Activated naive CD4-positive, alpha-beta T cell treated with anti-CD3 and anti-CD28 coated beads for 36 hours (primary cell): ENCODE measurements at regions of chr5 and their contacts with region 1.

Region 1: DNA sequence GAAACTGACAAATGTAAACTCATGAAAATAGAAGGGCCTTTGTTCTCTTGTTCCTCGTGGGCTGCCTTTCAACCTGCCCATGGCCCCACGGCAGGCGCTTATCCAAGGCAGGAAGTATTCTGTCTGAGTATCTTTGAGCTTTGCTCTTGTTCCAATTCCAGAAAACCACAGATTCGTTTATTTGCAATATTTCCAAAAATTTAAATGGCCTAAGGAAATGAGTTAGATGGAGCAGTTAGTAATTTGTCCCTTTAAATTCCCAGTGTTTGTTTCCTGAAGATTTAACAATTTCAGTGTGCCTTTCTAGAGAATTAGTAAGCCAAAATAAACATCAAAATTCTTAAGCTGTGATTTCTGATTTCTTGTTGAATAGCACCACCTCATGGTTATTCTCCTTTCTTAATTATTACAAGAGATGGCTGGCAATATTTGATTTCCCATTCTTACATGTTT is 299.4 kb upstream of the RASA1 start:
- DNase-seq: no peak
- H3K4me3 Mint-ChIP-seq: no peak overlapping the region
- H3K27ac Mint-ChIP-seq: no peak overlapping the region
- H3K4me1 Mint-ChIP-seq: peaks cover 3% of the 10 kb centered on the region
- H3K27me3 Mint-ChIP-seq: peaks cover 6% of the 10 kb centered on the region

Region 2: GRCh38 chr5:86542532-86542931 is 425.8 kb before region 1 on chr5:
- CTCF ChIA-PET with region 1: no interaction called
- intact Hi-C with region 1: no loop called
- DNase-seq: no peak
- H3K4me3 Mint-ChIP-seq: no peak overlapping the region
- H3K27ac Mint-ChIP-seq: no peak overlapping the region
- H3K4me1 Mint-ChIP-seq: no peaks in the 10 kb centered on the region
- H3K27me3 Mint-ChIP-seq: peaks cover 3% of the 10 kb centered on the region

Region 3: GRCh38 chr5:86565197-86565789 is 403.0 kb before region 1 on chr5:
- CTCF ChIA-PET with region 1: no interaction called
- intact Hi-C with region 1: loop called (anchors 10 kb)
- DNase-seq: no peak
- H3K4me3 Mint-ChIP-seq: no peak overlapping the region
- H3K27ac Mint-ChIP-seq: no peak overlapping the region
- H3K4me1 Mint-ChIP-seq: no peaks in the 10 kb centered on the region
- H3K27me3 Mint-ChIP-seq: peaks cover 9% of the 10 kb centered on the region

Region 4: DNA sequence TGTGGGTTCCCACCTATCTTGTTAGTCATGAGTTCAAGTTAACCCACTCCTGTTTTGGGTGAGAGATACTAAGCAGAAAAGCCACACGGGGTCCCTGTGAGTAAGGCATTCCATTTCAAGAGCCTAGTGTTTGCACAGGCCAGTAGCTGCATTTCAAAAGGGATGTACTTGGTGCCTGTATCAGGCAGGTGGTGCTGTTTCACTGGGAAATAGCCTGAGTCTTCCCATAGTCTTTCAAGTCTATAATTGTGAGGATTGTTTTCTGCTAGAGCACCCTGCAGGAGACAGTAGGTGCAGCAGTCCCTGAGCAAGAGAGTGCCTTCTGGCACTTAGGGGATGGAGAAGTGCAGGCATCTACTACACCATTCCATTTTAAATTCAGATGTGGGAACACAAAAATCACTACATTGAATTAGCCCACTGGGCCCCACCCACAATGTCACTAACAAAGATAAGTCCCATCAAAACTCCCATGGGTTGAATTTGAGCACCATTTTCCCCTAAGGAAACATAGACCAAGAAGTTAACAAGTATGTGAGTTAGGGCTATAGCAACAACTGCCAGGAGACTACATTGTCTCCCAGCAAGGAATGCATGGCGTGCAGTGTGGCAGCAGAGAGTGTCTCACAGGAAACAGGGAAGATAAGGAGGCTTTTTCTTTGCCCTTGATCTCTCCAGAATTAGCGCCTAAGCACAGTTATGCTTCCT is 87.4 kb before region 1 on chr5:
- CTCF ChIA-PET with region 1: interaction called, 30 read pairs
- intact Hi-C with region 1: loop called (anchors 1 kb)
- DNase-seq: peak; percentile 58
- H3K4me3 Mint-ChIP-seq: no peak overlapping the region
- H3K27ac Mint-ChIP-seq: no peak overlapping the region
- H3K4me1 Mint-ChIP-seq: no peaks in the 10 kb centered on the region
- H3K27me3 Mint-ChIP-seq: peaks cover 6% of the 10 kb centered on the region

Region 5: DNA sequence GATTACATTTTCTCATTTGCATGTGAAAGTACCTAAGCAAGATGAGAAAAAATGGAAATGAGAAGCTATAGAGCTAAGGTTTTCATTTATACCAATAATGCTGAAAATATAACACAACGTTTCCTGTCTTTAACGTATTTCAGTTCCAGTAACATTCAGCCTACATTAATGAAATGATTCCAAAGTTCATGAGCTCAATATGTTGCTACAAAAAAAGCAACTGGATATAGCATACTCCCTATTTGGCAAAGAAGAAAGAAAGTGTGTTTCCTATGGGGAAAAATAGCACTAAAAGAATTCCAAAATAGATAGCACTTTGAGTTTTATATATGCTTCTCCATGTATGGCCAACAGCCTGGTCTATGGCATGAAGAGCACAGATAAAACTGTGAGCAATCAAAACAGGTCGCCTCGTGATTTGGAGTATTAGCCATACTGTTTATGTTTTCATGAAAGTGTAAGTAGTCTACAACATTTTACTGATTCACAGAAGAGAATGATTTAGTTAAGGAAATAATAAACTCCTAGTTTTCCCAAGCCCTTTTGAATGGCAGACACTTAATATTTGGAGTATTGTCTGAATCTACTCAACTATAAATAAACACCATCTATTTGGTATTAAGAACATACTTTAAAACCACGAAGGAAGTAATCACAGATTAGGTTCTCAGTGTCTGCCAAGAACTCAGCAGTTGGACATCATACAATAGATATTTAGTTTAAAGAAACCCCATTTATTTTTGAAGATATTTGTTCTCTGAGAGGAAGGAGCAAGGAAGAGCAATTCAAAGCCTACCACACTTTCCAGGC is 40.6 kb after region 1 on chr5:
- CTCF ChIA-PET with region 1: interaction called, 4 read pairs
- intact Hi-C with region 1: loop called (anchors 2 kb)
- DNase-seq: no peak
- H3K4me3 Mint-ChIP-seq: no peak overlapping the region
- H3K27ac Mint-ChIP-seq: no peak overlapping the region
- H3K4me1 Mint-ChIP-seq: no peaks in the 10 kb centered on the region
- H3K27me3 Mint-ChIP-seq: no peaks in the 10 kb centered on the region